ENCODE measurements at regions of chr21 and their contacts with region 1.

Region 1: DNA sequence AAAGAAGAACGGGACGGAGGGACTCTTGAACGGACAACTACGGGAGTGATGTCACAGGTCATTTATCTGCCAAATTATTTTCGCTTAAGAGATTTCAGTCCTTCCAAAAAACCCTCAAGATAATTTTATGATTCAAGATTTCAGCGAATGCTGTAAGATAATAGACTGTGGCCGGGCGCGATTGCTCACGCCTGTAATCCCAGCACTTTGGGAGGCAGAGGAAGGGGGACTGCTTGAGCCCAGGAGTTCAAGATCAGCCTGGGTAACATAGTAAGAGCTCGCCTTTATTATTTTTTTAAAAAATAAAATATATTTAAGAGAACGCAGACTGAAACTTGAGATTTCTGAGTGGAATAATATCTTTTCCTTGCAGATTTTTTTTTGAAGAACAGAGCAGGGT is 609 bp downstream of the RWDD2B start:
- DNase-seq: no peak
- H3K4me3 Mint-ChIP-seq: peak overlapping the region; percentile 82
- H3K27ac Mint-ChIP-seq: peak overlapping the region; percentile 86
- H3K4me1 Mint-ChIP-seq: peaks cover 41% of the 10 kb centered on the region
- H3K27me3 Mint-ChIP-seq: no peaks in the 10 kb centered on the region

Region 2: DNA sequence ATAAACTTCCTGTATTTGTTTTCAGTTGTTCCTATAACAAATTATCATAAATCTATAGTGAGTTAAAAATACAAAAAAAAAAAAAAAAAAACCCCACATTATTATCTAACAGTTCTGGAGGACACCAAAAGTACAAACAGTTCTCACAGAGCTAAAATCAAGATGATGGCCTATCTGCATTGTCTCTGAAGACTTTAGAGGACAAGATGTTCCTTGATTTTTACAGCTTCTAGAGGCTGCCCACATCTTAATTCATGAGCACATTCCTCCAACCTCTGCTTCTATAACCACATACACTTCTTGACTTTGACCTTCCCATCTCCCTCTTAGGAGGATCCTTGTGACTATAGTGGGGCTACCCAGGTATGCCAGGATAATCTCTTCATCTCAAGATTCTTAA is 831.9 kb before region 1 on chr21:
- CTCF ChIA-PET with region 1: no interaction called
- POLR2A ChIA-PET with region 1: no interaction called
- DNase-seq: no peak
- H3K4me3 Mint-ChIP-seq: no peak overlapping the region
- H3K27ac Mint-ChIP-seq: no peak overlapping the region
- H3K4me1 Mint-ChIP-seq: no peaks in the 10 kb centered on the region
- H3K27me3 Mint-ChIP-seq: no peaks in the 10 kb centered on the region

Region 3: DNA sequence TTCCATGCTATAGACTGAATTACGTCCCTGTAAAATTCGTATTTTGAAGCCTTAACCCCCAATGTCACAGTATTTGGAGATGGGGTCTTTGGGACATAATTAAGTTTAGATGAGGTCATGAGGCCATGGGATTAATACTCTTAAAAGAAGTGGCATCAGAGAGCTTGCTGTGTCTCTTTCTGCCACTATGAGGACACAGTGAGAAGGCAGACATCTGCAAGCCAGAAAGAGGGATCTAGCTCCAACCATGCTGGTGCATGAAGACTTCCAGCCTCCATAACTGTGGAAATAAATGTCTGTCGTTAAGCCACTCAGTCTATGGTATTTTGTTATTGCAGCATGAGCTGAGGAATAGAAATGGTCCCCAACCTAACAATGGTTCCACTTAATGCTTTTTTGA is 124.9 kb before region 1 on chr21:
- CTCF ChIA-PET with region 1: no interaction called
- POLR2A ChIA-PET with region 1: no interaction called
- DNase-seq: no peak
- H3K4me3 Mint-ChIP-seq: no peak overlapping the region
- H3K27ac Mint-ChIP-seq: no peak overlapping the region
- H3K4me1 Mint-ChIP-seq: no peaks in the 10 kb centered on the region
- H3K27me3 Mint-ChIP-seq: peaks cover 28% of the 10 kb centered on the region

Region 4: GRCh38 chr21:28992526-28993292 is 25.8 kb before region 1 on chr21 and contains the start of gene LTN1:
- CTCF ChIA-PET with region 1: interaction called, 8 read pairs
- POLR2A ChIA-PET with region 1: interaction called, 74 read pairs
- DNase-seq: peak; percentile 99
- H3K4me3 Mint-ChIP-seq: peak within 1 kb of the TSS; percentile 86
- H3K27ac Mint-ChIP-seq: peak within 1 kb of the TSS; percentile 94
- H3K4me1 Mint-ChIP-seq: peaks cover 44% of the 10 kb centered on the region
- H3K27me3 Mint-ChIP-seq: no peaks in the 10 kb centered on the region
- total RNA-seq, gene LTN1: 25.8 to 26.5 TPM

Region 5: GRCh38 chr21:29002442-29003144 is 15.9 kb before region 1 on chr21:
- CTCF ChIA-PET with region 1: interaction called, 18 read pairs
- POLR2A ChIA-PET with region 1: interaction called, 127 read pairs
- DNase-seq: peak; percentile 96
- H3K4me3 Mint-ChIP-seq: peak overlapping the region; percentile 86
- H3K27ac Mint-ChIP-seq: peak overlapping the region; percentile 93
- H3K4me1 Mint-ChIP-seq: peaks cover 13% of the 10 kb centered on the region
- H3K27me3 Mint-ChIP-seq: no peaks in the 10 kb centered on the region

Region 6: GRCh38 chr21:29073222-29074006 is 54.9 kb after region 1 on chr21 and contains the start of gene CCT8:
- CTCF ChIA-PET with region 1: interaction called, 3 read pairs
- POLR2A ChIA-PET with region 1: interaction called, 49 read pairs
- DNase-seq: peak; percentile 99
- H3K4me3 Mint-ChIP-seq: peak within 1 kb of the TSS; percentile 97
- H3K27ac Mint-ChIP-seq: peak within 1 kb of the TSS; percentile 93
- H3K4me1 Mint-ChIP-seq: peaks cover 59% of the 10 kb centered on the region
- H3K27me3 Mint-ChIP-seq: no peaks in the 10 kb centered on the region
- total RNA-seq, gene CCT8: 214 to 216 TPM

Region 7: GRCh38 chr21:29078869-29079767 is 60.6 kb after region 1 on chr21:
- CTCF ChIA-PET with region 1: interaction called, 3 read pairs
- POLR2A ChIA-PET with region 1: interaction called, 49 read pairs
- DNase-seq: peak; percentile 42
- H3K4me3 Mint-ChIP-seq: peak overlapping the region; percentile 21
- H3K27ac Mint-ChIP-seq: peak overlapping the region; percentile 82
- H3K4me1 Mint-ChIP-seq: peaks cover 56% of the 10 kb centered on the region
- H3K27me3 Mint-ChIP-seq: no peaks in the 10 kb centered on the region